SK-N-SH (cell line): ENCODE measurements at regions of chr22 and their contacts with region 1.

Region 1: GRCh38 chr22:25554238-25554671 is 10.2 kb upstream of the GRK3 start:
- DNase-seq: no peak
- H3K4me3 ChIP-seq: no peak overlapping the region
- H3K27ac ChIP-seq: no peak overlapping the region
- H3K4me1 ChIP-seq: peaks cover 0 to 10% of the 10 kb centered on the region in 2 experiments; a peak in 1 of 4 replicates
- H3K27me3 ChIP-seq: no peaks in the 10 kb centered on the region
- CTCF ChIP-seq: no peak
- EP300 ChIP-seq: no peak
- RAD21 ChIP-seq: no peak

Region 2: DNA sequence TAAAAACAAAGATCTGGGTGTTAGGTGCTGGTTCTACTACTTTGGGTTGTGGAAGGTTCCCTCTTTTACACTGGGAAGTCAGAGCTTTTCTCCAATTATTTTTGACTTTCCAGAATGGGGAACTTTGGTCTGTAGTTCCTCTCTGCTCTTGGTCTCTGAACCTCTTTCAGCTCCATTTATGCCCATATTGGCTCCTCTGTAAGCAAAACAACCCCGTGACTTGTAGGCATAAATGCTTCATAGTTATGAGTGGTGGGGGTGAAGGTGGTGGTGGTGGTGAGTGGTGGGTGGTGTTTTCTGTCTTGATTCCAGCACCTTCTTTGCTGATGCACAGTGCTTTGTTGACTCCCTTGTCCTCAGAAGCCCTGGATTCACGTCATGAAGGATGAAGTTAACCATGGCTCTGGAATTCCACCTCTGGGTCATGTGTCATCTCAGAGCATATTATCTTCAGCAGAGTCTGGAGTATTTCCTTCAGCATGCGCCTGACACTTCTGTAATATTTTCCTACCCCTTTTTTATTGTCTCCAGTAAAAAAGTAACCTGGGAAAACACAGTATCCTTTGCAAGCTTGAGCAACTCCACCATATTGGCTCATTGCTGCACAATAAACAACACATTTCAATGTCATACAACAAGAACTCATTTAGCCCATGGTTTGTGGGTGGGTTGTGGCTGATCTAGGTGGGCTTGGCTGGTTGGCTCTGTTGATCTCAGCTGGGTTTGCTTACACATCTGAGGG is 13.9 kb before region 1 on chr22:
- CTCF ChIA-PET with region 1: interaction called, 12 read pairs
- POLR2A ChIA-PET with region 1: no interaction called
- DNase-seq: no peak
- H3K4me3 ChIP-seq: no peak overlapping the region
- H3K27ac ChIP-seq: no peak overlapping the region
- H3K4me1 ChIP-seq: no peaks in the 10 kb centered on the region; a peak in 2 of 4 replicates
- H3K27me3 ChIP-seq: no peaks in the 10 kb centered on the region
- CTCF ChIP-seq: no peak
- EP300 ChIP-seq: no peak
- RAD21 ChIP-seq: no peak